K562 (cell line): ENCODE measurements at regions of chr2 and their contacts with region 1.

Region 1: GRCh38 chr2:190180313-190181122 is 118.0 kb upstream of the MSTN start:
- DNase-seq: peak; percentile 83 to 88 (median 84)
- ATAC-seq: peak; percentile 83
- H3K4me3 ChIP-seq: peak overlapping the region; percentile 75
- H3K27ac ChIP-seq: peak overlapping the region; percentile 84
- H3K4me1 ChIP-seq: peaks cover 14 to 17% of the 10 kb centered on the region in 2 experiments; a peak in 4 of 5 replicates
- H3K27me3 ChIP-seq: no peaks in the 10 kb centered on the region
- CTCF ChIP-seq: peak; percentile 75 to 87 (median 77)
- EP300 ChIP-seq: no peak
- POLR2A ChIP-seq: peak; percentile 71
- RAD21 ChIP-seq: no peak; a peak in 1 of 4 replicates

Region 2: DNA sequence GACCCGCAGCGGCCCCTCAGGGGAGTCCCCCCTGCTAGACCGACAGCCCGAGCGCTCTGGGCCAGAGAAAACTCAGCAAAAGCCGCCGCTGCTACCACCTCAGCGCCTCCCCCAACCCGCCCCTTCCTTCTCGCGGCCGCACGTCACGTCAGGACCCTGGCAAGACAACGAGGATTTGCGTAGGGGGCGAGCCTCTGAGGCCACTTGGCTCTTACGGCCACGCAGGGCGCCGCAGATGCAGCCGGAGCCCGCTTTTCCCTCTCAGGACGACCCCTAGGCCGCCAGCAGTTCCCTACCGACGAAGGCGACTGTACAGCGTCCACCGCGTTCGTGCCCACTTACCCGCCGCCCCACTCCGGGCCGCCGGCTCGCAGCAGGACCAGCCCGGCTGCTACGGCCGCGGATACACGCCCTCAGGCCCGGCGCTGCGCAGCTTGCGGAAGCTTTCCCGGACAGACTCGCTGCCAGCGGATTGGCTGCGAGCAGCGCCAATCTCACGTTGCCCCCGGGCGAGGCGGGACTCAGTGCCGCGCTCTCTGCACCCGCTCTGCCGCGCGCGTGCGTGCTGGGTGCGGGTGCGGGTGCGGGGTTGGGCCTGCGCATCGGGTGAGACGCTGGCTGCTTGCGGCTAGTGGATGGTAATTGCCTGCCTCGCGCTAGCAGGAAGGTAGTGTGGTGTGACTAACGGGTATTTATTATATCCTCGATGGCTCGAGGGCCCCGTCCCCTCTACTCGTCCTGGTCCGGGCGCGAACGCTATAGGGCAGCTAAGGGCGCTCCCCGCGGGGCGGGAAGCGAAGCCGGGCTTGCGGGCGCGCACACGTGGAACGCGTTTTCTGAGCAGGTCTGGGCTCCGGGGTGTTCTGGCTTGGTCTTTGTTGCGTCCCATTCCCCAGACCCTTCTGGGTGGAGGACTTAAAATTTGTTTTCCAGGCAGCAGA is 396.3 kb before region 1 on chr2 and contains the starts of genes ORMDL1 and PMS1:
- CTCF ChIA-PET with region 1: no interaction called
- POLR2A ChIA-PET with region 1: no interaction called
- in situ Hi-C with region 1: no loop called
- intact Hi-C with region 1: loop called (anchors 10 kb)
- DNase-seq: peak; percentile 89 to 95 (median 92)
- ATAC-seq: peak; percentile 98
- H3K4me3 ChIP-seq: peak within 1 kb of the TSS; percentile 75
- H3K27ac ChIP-seq: peak within 1 kb of the TSS; percentile 90
- H3K4me1 ChIP-seq: peaks cover 6 to 10% of the 10 kb centered on the region in 2 experiments; a peak in 3 of 5 replicates
- H3K27me3 ChIP-seq: no peaks in the 10 kb centered on the region
- CTCF ChIP-seq: no peak
- EP300 ChIP-seq: no peak
- POLR2A ChIP-seq: peak; percentile 94
- RAD21 ChIP-seq: no peak
- polyA plus RNA-seq, gene ORMDL1: 50.0 to 57.5 TPM
- polyA plus RNA-seq, gene PMS1: 14.5 to 19.9 TPM

Region 3: DNA sequence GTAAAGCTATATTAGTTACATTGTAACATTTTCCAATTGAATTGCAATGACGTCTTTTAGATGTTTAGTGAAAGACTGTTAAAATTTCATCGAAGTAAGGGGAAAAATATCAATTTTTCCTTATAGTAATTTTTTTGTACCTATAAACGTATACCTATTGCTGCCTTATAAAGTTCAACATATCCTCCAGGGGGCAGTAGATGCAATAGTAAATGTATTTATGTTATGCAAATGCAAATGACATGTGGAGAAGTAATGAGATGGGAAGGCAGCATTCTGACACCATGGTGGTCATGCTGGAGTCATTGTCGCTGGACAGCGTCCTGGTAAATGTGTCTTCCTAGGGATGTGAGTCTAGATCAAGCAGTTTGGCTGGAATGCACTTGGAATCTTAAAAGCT is 156.7 kb before region 1 on chr2:
- CTCF ChIA-PET with region 1: no interaction called
- POLR2A ChIA-PET with region 1: no interaction called
- in situ Hi-C with region 1: no loop called
- intact Hi-C with region 1: loop called (anchors 5 kb)
- DNase-seq: peak; percentile 6 to 70 (median 16)
- ATAC-seq: peak; percentile 88
- H3K4me3 ChIP-seq: no peak overlapping the region
- H3K27ac ChIP-seq: no peak overlapping the region
- H3K4me1 ChIP-seq: no peaks in the 10 kb centered on the region
- H3K27me3 ChIP-seq: no peaks in the 10 kb centered on the region
- CTCF ChIP-seq: peak; percentile 35 to 60 (median 35); a peak in 4 of 6 replicates
- EP300 ChIP-seq: no peak
- POLR2A ChIP-seq: no peak
- RAD21 ChIP-seq: peak; percentile 31 to 50

Region 4: DNA sequence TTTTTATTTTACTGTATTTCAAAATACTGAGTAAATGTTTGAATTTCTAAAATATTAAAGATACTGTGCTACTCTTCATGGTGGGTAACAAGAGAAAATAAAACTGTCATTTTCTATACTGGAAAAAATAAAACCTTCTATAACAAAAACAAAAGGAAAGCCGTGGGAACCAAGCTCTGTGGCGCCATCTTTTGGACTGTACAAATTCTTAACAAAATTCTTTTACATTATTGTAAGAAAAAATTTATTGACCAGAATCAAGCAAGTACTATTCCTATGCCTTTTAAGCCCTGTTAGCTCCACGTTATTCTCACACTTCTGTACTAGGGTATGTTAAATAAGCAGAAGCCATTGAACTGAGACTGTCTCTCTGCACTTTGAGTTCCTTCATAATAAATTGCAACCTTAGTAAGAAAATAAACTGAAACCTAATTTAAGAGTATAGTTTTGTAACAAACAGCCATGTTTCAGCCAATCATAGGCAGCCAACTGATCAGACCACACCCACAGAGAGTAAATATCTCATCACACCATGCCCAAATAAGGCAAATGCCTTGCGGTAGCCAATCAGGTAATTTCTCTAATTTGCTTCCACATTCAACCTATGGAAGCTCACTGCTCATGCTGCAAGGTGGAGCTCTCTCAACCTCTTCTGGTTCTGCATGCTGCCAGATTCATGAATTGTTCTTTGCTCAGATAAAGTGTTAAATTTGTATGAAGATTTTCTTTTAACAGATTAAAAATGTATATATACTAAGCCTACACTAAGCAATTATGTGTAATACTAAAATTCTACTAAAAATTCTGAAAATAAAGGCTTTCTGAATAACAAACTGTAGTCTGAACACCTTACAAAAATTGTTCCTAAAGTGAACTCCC is 97.0 kb after region 1 on chr2:
- CTCF ChIA-PET with region 1: no interaction called
- POLR2A ChIA-PET with region 1: no interaction called
- in situ Hi-C with region 1: no loop called
- intact Hi-C with region 1: loop called (anchors 2 kb)
- DNase-seq: peak; percentile 24 to 66 (median 43)
- ATAC-seq: peak; percentile 99
- H3K4me3 ChIP-seq: no peak overlapping the region
- H3K27ac ChIP-seq: peak overlapping the region; percentile 78
- H3K4me1 ChIP-seq: peaks cover 0 to 10% of the 10 kb centered on the region in 2 experiments; a peak in 2 of 5 replicates
- H3K27me3 ChIP-seq: no peaks in the 10 kb centered on the region
- CTCF ChIP-seq: peak; percentile 33 to 64 (median 38); a peak in 4 of 6 replicates
- EP300 ChIP-seq: no peak
- POLR2A ChIP-seq: no peak
- RAD21 ChIP-seq: peak; percentile 64 to 73

Region 5: DNA sequence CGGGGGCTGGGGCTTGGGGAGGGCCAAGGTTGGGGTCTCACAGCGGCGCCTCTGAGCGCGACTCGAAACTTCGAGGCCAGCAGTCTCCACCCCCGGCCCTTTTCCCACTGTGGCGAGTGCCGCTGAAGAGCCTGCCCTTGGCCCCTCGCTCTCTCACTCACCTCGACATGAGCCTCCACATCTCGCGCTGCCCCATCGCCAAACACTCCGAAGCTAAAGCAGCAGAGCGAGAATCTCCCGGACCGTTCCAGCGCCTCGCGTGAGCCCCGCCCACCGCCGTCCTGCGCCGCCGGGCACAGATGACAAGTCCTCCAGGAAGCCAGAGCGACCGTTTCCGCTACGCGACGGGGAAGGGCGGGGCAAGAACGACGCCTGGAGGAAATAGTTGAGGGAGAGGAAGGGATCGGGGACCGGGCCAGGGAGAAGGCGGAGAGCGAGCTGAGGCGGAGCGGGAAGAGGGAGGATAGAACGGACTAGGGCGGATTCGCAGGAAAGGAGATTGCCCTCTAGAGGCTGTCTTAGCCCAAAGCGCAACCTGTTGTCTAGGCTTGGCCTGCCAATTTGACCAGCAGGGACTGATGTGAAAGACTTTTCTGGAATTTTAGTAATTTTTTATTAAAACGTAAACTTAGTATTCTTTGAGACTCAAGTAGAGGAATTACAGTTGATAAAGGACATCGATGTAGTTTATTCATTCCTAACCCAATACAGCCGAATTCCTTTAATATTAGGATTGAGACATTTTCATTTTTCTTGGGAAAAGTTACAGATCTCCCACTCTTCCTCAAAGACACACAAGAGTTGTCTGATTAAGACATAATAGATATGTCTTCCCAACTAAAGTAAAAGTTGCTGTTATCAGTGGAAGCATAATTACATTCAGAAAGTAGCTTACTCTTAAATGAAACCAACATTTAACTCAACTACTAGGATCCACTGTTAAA is 139.3 kb after region 1 on chr2 and contains the start of gene HIBCH:
- CTCF ChIA-PET with region 1: no interaction called
- POLR2A ChIA-PET with region 1: no interaction called
- in situ Hi-C with region 1: no loop called
- intact Hi-C with region 1: loop called (anchors 5 kb)
- DNase-seq: peak; percentile 75 to 98 (median 82)
- ATAC-seq: peak; percentile 95
- H3K4me3 ChIP-seq: peak within 1 kb of the TSS; percentile 72
- H3K27ac ChIP-seq: peak within 1 kb of the TSS; percentile 52
- H3K4me1 ChIP-seq: peaks cover 0 to 12% of the 10 kb centered on the region in 2 experiments; a peak in 3 of 5 replicates
- H3K27me3 ChIP-seq: no peaks in the 10 kb centered on the region
- CTCF ChIP-seq: peak; percentile 83 to 85 (median 84)
- EP300 ChIP-seq: peak; percentile 16
- POLR2A ChIP-seq: peak; percentile 71
- RAD21 ChIP-seq: peak; percentile 9 to 31; a peak in 1 of 4 replicates
- polyA plus RNA-seq, gene HIBCH: 52.8 to 65.4 TPM

Region 6: DNA sequence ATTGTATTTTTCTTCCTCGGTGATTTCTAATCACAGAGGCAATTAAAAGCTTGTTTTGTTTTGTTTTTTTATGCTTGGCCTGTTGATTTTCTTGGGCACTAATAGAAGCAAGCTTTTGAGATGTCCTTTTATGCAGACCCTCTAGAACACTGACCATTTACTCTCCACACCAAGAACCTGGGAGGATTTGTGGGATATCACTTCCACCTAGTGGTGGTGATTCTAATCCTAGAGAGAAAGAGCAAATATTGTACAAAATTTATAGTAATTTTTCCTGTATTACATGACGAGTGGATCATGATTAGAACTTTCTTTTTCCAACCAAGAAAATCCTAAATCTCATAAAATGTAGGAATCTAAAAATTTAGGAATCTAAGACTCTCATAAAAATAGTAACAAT is 330.6 kb after region 1 on chr2:
- CTCF ChIA-PET with region 1: no interaction called
- POLR2A ChIA-PET with region 1: no interaction called
- in situ Hi-C with region 1: no loop called
- intact Hi-C with region 1: loop called (anchors 2 kb)
- DNase-seq: peak in 2 of 4 experiments; percentile 43 to 58
- ATAC-seq: peak; percentile 86
- H3K4me3 ChIP-seq: no peak overlapping the region
- H3K27ac ChIP-seq: no peak overlapping the region
- H3K4me1 ChIP-seq: no peaks in the 10 kb centered on the region; a peak in 2 of 5 replicates
- H3K27me3 ChIP-seq: no peaks in the 10 kb centered on the region
- CTCF ChIP-seq: peak; percentile 44 to 69 (median 50); a peak in 4 of 6 replicates
- EP300 ChIP-seq: no peak
- POLR2A ChIP-seq: no peak
- RAD21 ChIP-seq: peak; percentile 78 to 90